CD8-positive, alpha-beta T cell (primary cell): ENCODE measurements at regions of chr11 and their contacts with region 1.

Region 1: DNA sequence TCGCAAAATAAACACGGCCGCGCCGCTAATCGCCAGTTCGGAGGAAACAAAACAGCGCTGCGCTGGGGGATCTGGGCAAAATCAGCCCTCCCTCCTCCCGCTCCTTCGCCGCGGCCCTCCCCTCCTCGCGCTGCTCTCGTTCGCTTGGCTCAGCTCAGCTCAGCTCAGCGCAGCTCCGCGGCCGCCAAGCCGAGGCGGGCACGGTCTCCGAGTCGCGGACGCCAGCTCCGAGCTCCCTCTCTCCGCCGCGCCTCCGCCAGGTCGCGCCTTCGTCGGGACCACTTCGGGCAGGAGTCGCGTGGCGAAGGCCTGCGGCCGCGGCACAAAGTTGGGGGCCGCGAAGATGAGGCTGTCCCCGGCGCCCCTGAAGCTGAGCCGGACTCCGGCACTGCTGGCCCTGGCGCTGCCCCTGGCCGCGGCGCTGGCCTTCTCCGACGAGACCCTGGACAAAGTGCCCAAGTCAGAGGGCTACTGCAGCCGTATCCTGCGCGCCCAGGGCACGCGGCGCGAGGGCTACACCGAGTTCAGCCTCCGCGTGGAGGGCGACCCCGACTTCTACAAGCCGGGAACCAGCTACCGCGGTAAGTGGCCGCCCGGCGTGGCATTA is at the start of gene SPON1:
- DNase-seq: peak in 8 of 9 experiments; percentile 26 to 70 (median 52)
- ATAC-seq: peak; percentile 89
- H3K4me3 ChIP-seq: peak within 1 kb of the TSS; percentile 12 to 47
- H3K4me3 Mint-ChIP-seq: peak within 1 kb of the TSS; percentile 82
- H3K27ac ChIP-seq: no peak within 1 kb of the TSS
- H3K27ac Mint-ChIP-seq: no peak within 1 kb of the TSS
- H3K4me1 ChIP-seq: peaks cover 20% of the 10 kb centered on the region
- H3K4me1 Mint-ChIP-seq: peaks cover 13% of the 10 kb centered on the region
- H3K27me3 ChIP-seq: peaks cover 10 to 19% of the 10 kb centered on the region in 2 experiments
- H3K27me3 Mint-ChIP-seq: peaks cover 48% of the 10 kb centered on the region
- CTCF ChIP-seq: no peak
- total RNA-seq, gene SPON1: 1.4 to 2.3 TPM

Region 2: GRCh38 chr11:13216019-13216710 is 746.5 kb before region 1 on chr11:
- CTCF ChIA-PET with region 1: no interaction called
- POLR2A ChIA-PET with region 1: no interaction called
- intact Hi-C with region 1: no loop called
- DNase-seq: no peak
- ATAC-seq: no peak
- H3K4me3 ChIP-seq: no peak overlapping the region
- H3K4me3 Mint-ChIP-seq: no peak overlapping the region
- H3K27ac ChIP-seq: no peak overlapping the region
- H3K27ac Mint-ChIP-seq: no peak overlapping the region
- H3K4me1 ChIP-seq: no peaks in the 10 kb centered on the region
- H3K4me1 Mint-ChIP-seq: no peaks in the 10 kb centered on the region
- H3K27me3 ChIP-seq: no peaks in the 10 kb centered on the region
- H3K27me3 Mint-ChIP-seq: peaks cover 7% of the 10 kb centered on the region
- CTCF ChIP-seq: no peak

Region 3: DNA sequence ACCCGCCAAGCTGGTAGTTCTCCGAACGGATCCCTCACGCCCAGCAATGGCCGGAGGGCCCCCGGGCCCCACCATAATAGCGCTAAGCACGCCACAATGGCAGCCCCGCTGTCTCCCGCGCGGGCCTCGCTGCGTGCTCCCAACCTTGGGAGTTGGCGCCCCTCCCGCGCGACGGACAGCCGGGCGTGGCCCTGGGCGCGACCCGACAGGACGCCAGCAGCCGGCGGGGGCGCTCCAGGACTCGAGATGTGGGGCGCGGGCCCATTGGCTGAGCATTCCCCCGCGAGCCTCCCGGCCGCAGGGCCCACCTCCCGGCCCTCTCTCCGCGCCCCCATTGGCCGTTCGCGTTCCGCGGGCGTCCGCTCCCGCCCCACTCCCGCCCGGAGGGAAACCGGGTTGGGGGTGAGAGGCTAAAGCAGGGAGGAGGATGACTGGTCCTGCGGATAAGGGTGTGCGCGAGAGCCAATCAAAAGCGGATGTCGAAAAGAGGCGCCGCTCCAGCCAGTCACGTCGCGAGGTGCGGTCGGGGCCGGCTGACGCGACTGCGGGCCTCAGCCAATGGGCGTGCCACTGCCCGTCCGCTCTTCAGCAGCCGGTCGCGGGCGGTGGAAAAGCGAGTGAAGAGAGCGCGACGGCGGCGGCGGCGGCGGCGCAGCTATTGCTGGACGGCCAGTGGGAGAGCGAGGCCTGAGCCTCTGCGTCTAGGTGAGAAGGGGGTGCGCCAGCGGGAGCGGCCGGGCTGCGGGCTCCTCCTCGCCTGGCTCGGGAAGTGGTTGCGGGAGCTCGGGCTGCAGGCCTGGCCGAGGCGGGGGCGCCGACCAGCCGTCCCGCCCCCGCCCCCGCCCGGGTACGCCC is 294.3 kb before region 1 on chr11 and contains the start of gene FAR1:
- CTCF ChIA-PET with region 1: no interaction called
- POLR2A ChIA-PET with region 1: no interaction called
- intact Hi-C with region 1: loop called in 1 of 2 experiments (anchors 10 kb)
- DNase-seq: peak; percentile 92 to 98 (median 95)
- ATAC-seq: peak; percentile 89
- H3K4me3 ChIP-seq: peak within 1 kb of the TSS; percentile 76 to 81
- H3K4me3 Mint-ChIP-seq: peak within 1 kb of the TSS; percentile 98
- H3K27ac ChIP-seq: peak within 1 kb of the TSS; percentile 66 to 69
- H3K27ac Mint-ChIP-seq: peak within 1 kb of the TSS; percentile 96
- H3K4me1 ChIP-seq: peaks cover 14% of the 10 kb centered on the region
- H3K4me1 Mint-ChIP-seq: peaks cover 45% of the 10 kb centered on the region
- H3K27me3 ChIP-seq: no peaks in the 10 kb centered on the region
- H3K27me3 Mint-ChIP-seq: peaks cover 5% of the 10 kb centered on the region
- CTCF ChIP-seq: peak; percentile 70
- total RNA-seq, gene FAR1: 29.8 to 34.0 TPM

Region 4: GRCh38 chr11:13907678-13908077 is 55.0 kb before region 1 on chr11:
- CTCF ChIA-PET with region 1: no interaction called
- POLR2A ChIA-PET with region 1: no interaction called
- intact Hi-C with region 1: loop called in 1 of 2 experiments (anchors 5 kb)
- DNase-seq: no peak
- ATAC-seq: no peak
- H3K4me3 ChIP-seq: no peak overlapping the region
- H3K4me3 Mint-ChIP-seq: no peak overlapping the region
- H3K27ac ChIP-seq: no peak overlapping the region
- H3K27ac Mint-ChIP-seq: no peak overlapping the region
- H3K4me1 ChIP-seq: no peaks in the 10 kb centered on the region
- H3K4me1 Mint-ChIP-seq: no peaks in the 10 kb centered on the region
- H3K27me3 ChIP-seq: no peaks in the 10 kb centered on the region
- H3K27me3 Mint-ChIP-seq: no peaks in the 10 kb centered on the region
- CTCF ChIP-seq: no peak

Region 5: GRCh38 chr11:13949876-13950275 is 12.8 kb before region 1 on chr11:
- CTCF ChIA-PET with region 1: interaction called, 11 read pairs
- POLR2A ChIA-PET with region 1: no interaction called
- intact Hi-C with region 1: no loop called
- DNase-seq: no peak
- ATAC-seq: no peak
- H3K4me3 ChIP-seq: no peak overlapping the region
- H3K4me3 Mint-ChIP-seq: no peak overlapping the region
- H3K27ac ChIP-seq: no peak overlapping the region
- H3K27ac Mint-ChIP-seq: no peak overlapping the region
- H3K4me1 ChIP-seq: no peaks in the 10 kb centered on the region
- H3K4me1 Mint-ChIP-seq: peaks cover 11% of the 10 kb centered on the region
- H3K27me3 ChIP-seq: no peaks in the 10 kb centered on the region
- H3K27me3 Mint-ChIP-seq: no peaks in the 10 kb centered on the region
- CTCF ChIP-seq: no peak

Region 6: DNA sequence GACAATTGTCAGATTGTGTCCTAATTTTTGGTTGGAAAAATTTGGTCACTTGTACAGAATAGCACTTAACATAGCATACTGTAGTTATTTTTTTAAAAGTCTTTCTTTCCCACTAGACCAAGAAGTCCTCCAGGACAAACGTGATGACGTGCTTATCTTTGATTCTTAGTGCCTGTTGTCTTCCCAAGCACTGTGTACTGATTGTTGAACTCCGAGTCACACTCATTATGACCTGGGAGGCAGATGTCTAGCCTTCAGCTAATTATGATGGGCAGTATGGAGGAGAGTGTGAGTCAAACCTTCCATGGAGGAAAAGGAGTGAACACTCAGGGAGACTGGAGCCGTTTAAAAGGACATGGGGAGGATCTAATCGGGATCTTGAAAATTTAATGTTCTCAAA is 119.7 kb after region 1 on chr11:
- CTCF ChIA-PET with region 1: no interaction called
- POLR2A ChIA-PET with region 1: no interaction called
- intact Hi-C with region 1: loop called (anchors 5 kb)
- DNase-seq: no peak
- ATAC-seq: no peak
- H3K4me3 ChIP-seq: no peak overlapping the region
- H3K4me3 Mint-ChIP-seq: no peak overlapping the region
- H3K27ac ChIP-seq: no peak overlapping the region
- H3K27ac Mint-ChIP-seq: no peak overlapping the region
- H3K4me1 ChIP-seq: peaks cover 24% of the 10 kb centered on the region
- H3K4me1 Mint-ChIP-seq: peaks cover 36% of the 10 kb centered on the region
- H3K27me3 ChIP-seq: peaks cover 0 to 3% of the 10 kb centered on the region in 2 experiments
- H3K27me3 Mint-ChIP-seq: no peaks in the 10 kb centered on the region
- CTCF ChIP-seq: no peak